Activated CD4-positive, alpha-beta T cell treated with anti-CD3 and anti-CD28 coated beads for 36 hours (primary cell): ENCODE measurements at regions of chr1 and their contacts with region 1.

Region 1: GRCh38 chr1:40404670-40405462 is 31.3 kb downstream of the SMAP2 start:
- DNase-seq: peak; percentile 61
- ATAC-seq: peak; percentile 34
- H3K4me3 Mint-ChIP-seq: peak overlapping the region; percentile 3
- H3K27ac Mint-ChIP-seq: peak overlapping the region; percentile 91
- H3K4me1 Mint-ChIP-seq: peaks cover 64% of the 10 kb centered on the region
- H3K27me3 Mint-ChIP-seq: no peaks in the 10 kb centered on the region

Region 2: GRCh38 chr1:39981957-39982356 is 422.9 kb before region 1 on chr1:
- CTCF ChIA-PET with region 1: no interaction called
- POLR2A ChIA-PET with region 1: no interaction called
- intact Hi-C with region 1: no loop called
- DNase-seq: no peak
- ATAC-seq: no peak
- H3K4me3 Mint-ChIP-seq: no peak overlapping the region
- H3K27ac Mint-ChIP-seq: no peak overlapping the region
- H3K4me1 Mint-ChIP-seq: no peaks in the 10 kb centered on the region
- H3K27me3 Mint-ChIP-seq: no peaks in the 10 kb centered on the region

Region 3: GRCh38 chr1:40257688-40258444 is 147.0 kb before region 1 on chr1 and contains the start of gene ZMPSTE24:
- CTCF ChIA-PET with region 1: interaction called, 4 read pairs
- POLR2A ChIA-PET with region 1: no interaction called
- intact Hi-C with region 1: loop called in 1 of 2 experiments (anchors 5 kb)
- DNase-seq: peak; percentile 98
- ATAC-seq: peak; percentile 97
- H3K4me3 Mint-ChIP-seq: peak within 1 kb of the TSS; percentile 99
- H3K27ac Mint-ChIP-seq: peak within 1 kb of the TSS; percentile 100
- H3K4me1 Mint-ChIP-seq: peaks cover 47% of the 10 kb centered on the region
- H3K27me3 Mint-ChIP-seq: no peaks in the 10 kb centered on the region
- total RNA-seq, gene ZMPSTE24: 20.7 to 23.0 TPM

Region 4: GRCh38 chr1:40363721-40364120 is 41.1 kb before region 1 on chr1:
- CTCF ChIA-PET with region 1: interaction called, 14 read pairs
- POLR2A ChIA-PET with region 1: no interaction called
- intact Hi-C with region 1: no loop called
- DNase-seq: peak; percentile 69
- ATAC-seq: peak; percentile 99
- H3K4me3 Mint-ChIP-seq: no peak overlapping the region
- H3K27ac Mint-ChIP-seq: no peak overlapping the region
- H3K4me1 Mint-ChIP-seq: peaks cover 12% of the 10 kb centered on the region
- H3K27me3 Mint-ChIP-seq: no peaks in the 10 kb centered on the region

Region 5: GRCh38 chr1:40394491-40395172 is 10.2 kb before region 1 on chr1:
- CTCF ChIA-PET with region 1: interaction called, 54 read pairs
- POLR2A ChIA-PET with region 1: interaction called, 5 read pairs
- intact Hi-C with region 1: no loop called
- DNase-seq: peak; percentile 65
- ATAC-seq: peak; percentile 93
- H3K4me3 Mint-ChIP-seq: peak overlapping the region; percentile 55
- H3K27ac Mint-ChIP-seq: peak overlapping the region; percentile 95
- H3K4me1 Mint-ChIP-seq: peaks cover 91% of the 10 kb centered on the region
- H3K27me3 Mint-ChIP-seq: no peaks in the 10 kb centered on the region